ENCODE measurements at regions of chr2 and their contacts with region 1.

Region 1: DNA sequence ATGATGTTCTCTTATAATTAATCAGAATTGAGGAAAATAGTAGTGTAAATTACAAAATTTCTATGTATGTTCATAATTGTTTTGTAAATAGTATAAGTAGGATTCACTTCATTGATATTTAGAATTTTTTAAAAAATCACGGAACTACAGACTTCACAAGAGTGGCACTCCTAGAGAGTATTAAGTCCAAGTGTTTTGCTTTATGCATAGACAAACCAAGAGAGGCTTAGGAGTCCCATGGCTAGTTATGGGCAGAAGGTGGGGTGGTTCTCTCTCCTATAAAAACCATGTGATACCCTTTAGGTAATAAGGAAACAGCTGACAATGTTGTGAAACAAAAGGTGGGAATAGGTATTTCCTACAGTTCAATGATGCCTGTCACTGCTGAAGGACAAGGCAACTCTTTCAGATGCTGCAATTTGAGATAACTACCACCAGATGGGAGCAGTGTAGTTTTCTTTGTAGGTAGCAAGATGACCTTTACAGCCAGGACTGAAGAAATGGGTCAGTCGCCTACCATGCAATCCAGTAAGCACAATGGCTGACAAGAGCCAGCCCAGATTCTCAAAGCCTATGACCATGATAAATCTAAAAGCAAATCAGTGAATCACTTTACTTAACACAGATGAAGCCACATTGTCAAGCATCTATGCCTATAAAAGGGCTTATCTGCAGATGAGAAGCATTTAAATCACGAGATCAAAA is 83.9 kb downstream of the AAK1 start:
- DNase-seq: no peak
- ATAC-seq: peak; percentile 71 to 84 (median 76)
- H3K4me3 ChIP-seq: no peak overlapping the region
- H3K27ac ChIP-seq: peak overlapping the region in 2 of 10 donors; percentile 4 to 10
- H3K4me1 ChIP-seq: peaks cover 11 to 76% (median 44%) of the 10 kb centered on the region in 9 donors
- H3K27me3 ChIP-seq: no peaks in the 10 kb centered on the region
- CTCF ChIP-seq: peak in 8 of 9 donors; percentile 44 to 81 (median 72)

Region 2: GRCh38 chr2:69724540-69725159 is 165.1 kb after region 1 on chr2:
- intact Hi-C with region 1: loop called in 3 of 10 experiments (anchors 5 kb)
- DNase-seq: peak; percentile 82 to 84
- ATAC-seq: peak; percentile 72 to 92 (median 88)
- H3K4me3 ChIP-seq: peak overlapping the region in 7 of 10 donors; percentile 24 to 49 (median 37)
- H3K27ac ChIP-seq: no peak overlapping the region
- H3K4me1 ChIP-seq: peaks cover 0 to 8% (median 0%) of the 10 kb centered on the region in 9 donors
- H3K27me3 ChIP-seq: no peaks in the 10 kb centered on the region
- CTCF ChIP-seq: peak; percentile 94 to 97 (median 95)

Region 3: GRCh38 chr2:69829256-69830046 is 269.9 kb after region 1 on chr2 and contains the start of gene GMCL1:
- intact Hi-C with region 1: loop called in 2 of 10 experiments (anchors 10 kb)
- DNase-seq: peak; percentile 95 to 99
- ATAC-seq: peak; percentile 98 to 100 (median 99)
- H3K4me3 ChIP-seq: peak within 1 kb of the TSS; percentile 62 to 100 (median 96)
- H3K27ac ChIP-seq: peak within 1 kb of the TSS; percentile 83 to 97 (median 93)
- H3K4me1 ChIP-seq: peaks cover 6 to 43% (median 30%) of the 10 kb centered on the region in 9 donors
- H3K27me3 ChIP-seq: no peaks in the 10 kb centered on the region
- CTCF ChIP-seq: peak in 3 of 9 donors; percentile 31 to 45 (median 33)
- total RNA-seq, gene GMCL1: 4.3 to 8.0 (median 5.1) TPM